ENCODE measurements at regions of chr6 and their contacts with region 1.

Region 1: GRCh38 chr6:10733151-10733715 is 10.4 kb downstream of the TMEM14C start:
- DNase-seq: peak; percentile 62 to 79
- ATAC-seq: peak; percentile 88 to 98 (median 91)
- H3K4me3 ChIP-seq: no peak overlapping the region
- H3K4me3 Mint-ChIP-seq: peak overlapping the region; percentile 67
- H3K27ac ChIP-seq: no peak overlapping the region
- H3K27ac Mint-ChIP-seq: peak overlapping the region; percentile 60 to 71
- H3K4me1 ChIP-seq: peaks cover 15% of the 10 kb centered on the region
- H3K4me1 Mint-ChIP-seq: peaks cover 17 to 19% of the 10 kb centered on the region in 2 donors
- H3K27me3 ChIP-seq: peaks cover 4% of the 10 kb centered on the region
- H3K27me3 Mint-ChIP-seq: peaks cover 24 to 41% of the 10 kb centered on the region in 2 donors
- CTCF ChIP-seq: no peak

Region 2: DNA sequence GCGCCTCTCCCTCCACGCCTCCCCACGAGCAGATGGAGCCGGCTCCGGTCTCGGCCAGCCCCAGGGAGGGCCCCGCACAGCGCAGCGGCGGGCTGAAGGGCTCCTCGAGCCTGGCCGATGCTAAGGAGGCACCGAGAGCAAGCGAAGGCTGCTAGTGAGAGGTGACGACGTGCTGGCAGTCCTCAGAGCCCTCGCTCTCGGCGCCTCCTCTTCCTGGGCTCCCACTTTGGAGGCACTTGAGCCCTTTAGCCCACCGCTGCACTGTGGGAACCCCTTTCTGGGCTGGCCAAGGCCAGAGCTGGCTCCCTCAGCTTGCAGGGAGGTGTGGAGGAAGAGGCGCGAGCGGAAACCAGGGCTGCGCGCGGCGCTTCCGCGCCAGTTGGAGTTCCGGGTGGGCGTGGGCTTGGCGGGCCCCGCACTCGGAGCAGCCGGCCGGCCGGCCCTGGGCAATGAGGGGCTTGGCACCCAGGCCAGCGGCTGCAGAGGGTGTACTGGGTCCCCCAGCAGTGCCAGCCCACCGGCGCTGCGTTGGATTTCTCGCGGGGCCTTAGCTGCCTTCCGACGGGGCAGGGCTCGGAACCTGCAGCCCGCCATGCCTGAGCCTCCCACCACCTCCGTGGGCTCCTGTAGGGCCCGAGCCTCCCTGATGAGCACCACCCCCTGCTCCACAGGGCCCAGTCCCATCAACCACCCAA is 12.8 kb before region 1 on chr6:
- intact Hi-C with region 1: loop called (anchors 2 kb)
- DNase-seq: peak; percentile 56 to 74
- ATAC-seq: peak; percentile 62 to 71 (median 64)
- H3K4me3 ChIP-seq: peak overlapping the region; percentile 49
- H3K4me3 Mint-ChIP-seq: peak overlapping the region; percentile 79
- H3K27ac ChIP-seq: peak overlapping the region; percentile 59
- H3K27ac Mint-ChIP-seq: peak overlapping the region in 1 of 2 donors; percentile 89
- H3K4me1 ChIP-seq: peaks cover 42% of the 10 kb centered on the region
- H3K4me1 Mint-ChIP-seq: peaks cover 31 to 49% of the 10 kb centered on the region in 2 donors
- H3K27me3 ChIP-seq: peaks cover 10% of the 10 kb centered on the region
- H3K27me3 Mint-ChIP-seq: peaks cover 18 to 19% of the 10 kb centered on the region in 2 donors
- CTCF ChIP-seq: no peak

Region 3: GRCh38 chr6:10747251-10747972 is 14.2 kb after region 1 on chr6 and contains the start of gene TMEM14B:
- intact Hi-C with region 1: loop called (anchors 1 kb)
- DNase-seq: peak; percentile 98 to 100
- ATAC-seq: peak; percentile 86 to 97 (median 92)
- H3K4me3 ChIP-seq: peak within 1 kb of the TSS; percentile 85
- H3K4me3 Mint-ChIP-seq: peak within 1 kb of the TSS; percentile 87
- H3K27ac ChIP-seq: peak within 1 kb of the TSS; percentile 69
- H3K27ac Mint-ChIP-seq: peak within 1 kb of the TSS; percentile 82 to 93
- H3K4me1 ChIP-seq: peaks cover 38% of the 10 kb centered on the region
- H3K4me1 Mint-ChIP-seq: peaks cover 43 to 48% of the 10 kb centered on the region in 2 donors
- H3K27me3 ChIP-seq: no peaks in the 10 kb centered on the region
- H3K27me3 Mint-ChIP-seq: peaks cover 9 to 11% of the 10 kb centered on the region in 2 donors
- CTCF ChIP-seq: no peak
- total RNA-seq, gene TMEM14B: 21.0 to 38.4 (median 30.8) TPM

Region 4: GRCh38 chr6:11172501-11173332 is 439.5 kb after region 1 on chr6:
- intact Hi-C with region 1: no loop called
- DNase-seq: peak; percentile 76 to 86
- ATAC-seq: peak; percentile 75 to 89 (median 83)
- H3K4me3 ChIP-seq: no peak overlapping the region
- H3K4me3 Mint-ChIP-seq: peak overlapping the region; percentile 80
- H3K27ac ChIP-seq: no peak overlapping the region
- H3K27ac Mint-ChIP-seq: peak overlapping the region in 1 of 2 donors; percentile 75
- H3K4me1 ChIP-seq: peaks cover 6% of the 10 kb centered on the region
- H3K4me1 Mint-ChIP-seq: peaks cover 12 to 19% of the 10 kb centered on the region in 2 donors
- H3K27me3 ChIP-seq: no peaks in the 10 kb centered on the region
- H3K27me3 Mint-ChIP-seq: no peaks in the 10 kb centered on the region
- CTCF ChIP-seq: peak; percentile 89